ENCODE measurements at regions of chr11 and their contacts with region 1.

Region 1: DNA sequence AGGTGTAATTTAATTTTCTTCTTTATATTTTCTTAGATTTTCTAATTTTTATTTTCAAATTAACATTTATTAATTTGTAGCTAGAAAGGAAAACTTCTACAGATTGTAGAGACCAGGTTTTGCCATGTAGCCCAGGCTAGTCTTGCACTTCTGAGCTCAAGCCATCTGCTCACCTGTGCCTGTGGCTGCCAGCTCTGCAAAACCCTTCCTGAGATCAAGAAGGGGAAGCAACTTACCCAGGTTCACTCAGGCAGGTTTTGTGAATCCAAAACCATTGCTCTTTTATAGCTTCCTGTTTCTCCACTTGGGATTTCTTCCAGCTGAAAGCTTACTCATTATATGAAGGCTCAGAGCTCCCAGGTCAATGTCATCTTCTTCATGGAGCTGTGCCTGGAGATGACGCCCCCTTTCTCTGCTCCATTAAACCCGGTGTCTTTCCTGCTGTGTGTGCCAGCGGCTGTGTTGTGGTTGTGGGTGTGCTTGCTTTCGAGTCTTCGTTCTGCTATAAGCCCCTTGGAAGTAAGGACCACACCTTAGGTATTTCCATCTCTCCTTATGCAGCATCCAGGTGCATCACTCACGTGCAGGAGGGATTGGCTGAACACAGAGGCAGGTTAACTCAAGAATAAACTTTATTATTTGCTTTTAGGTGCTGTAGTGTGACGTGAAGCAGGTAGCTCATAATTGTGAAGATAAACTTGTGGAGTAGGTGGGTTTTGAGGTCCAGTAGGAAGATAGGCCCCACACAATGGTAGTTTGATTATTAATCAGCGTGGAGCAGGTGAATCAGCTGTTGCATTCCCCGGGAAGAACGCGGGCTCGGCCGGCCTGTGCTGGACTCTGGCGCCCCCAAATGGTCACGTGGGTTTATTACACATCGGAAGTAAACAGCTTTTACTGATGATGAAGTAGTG is 42.2 kb upstream of the INCENP start:
- DNase-seq: peak; percentile 84
- H3K4me3 Mint-ChIP-seq: no peak overlapping the region
- H3K27ac Mint-ChIP-seq: no peak overlapping the region
- H3K4me1 Mint-ChIP-seq: peaks cover 8% of the 10 kb centered on the region
- H3K27me3 Mint-ChIP-seq: peaks cover 5% of the 10 kb centered on the region

Region 2: DNA sequence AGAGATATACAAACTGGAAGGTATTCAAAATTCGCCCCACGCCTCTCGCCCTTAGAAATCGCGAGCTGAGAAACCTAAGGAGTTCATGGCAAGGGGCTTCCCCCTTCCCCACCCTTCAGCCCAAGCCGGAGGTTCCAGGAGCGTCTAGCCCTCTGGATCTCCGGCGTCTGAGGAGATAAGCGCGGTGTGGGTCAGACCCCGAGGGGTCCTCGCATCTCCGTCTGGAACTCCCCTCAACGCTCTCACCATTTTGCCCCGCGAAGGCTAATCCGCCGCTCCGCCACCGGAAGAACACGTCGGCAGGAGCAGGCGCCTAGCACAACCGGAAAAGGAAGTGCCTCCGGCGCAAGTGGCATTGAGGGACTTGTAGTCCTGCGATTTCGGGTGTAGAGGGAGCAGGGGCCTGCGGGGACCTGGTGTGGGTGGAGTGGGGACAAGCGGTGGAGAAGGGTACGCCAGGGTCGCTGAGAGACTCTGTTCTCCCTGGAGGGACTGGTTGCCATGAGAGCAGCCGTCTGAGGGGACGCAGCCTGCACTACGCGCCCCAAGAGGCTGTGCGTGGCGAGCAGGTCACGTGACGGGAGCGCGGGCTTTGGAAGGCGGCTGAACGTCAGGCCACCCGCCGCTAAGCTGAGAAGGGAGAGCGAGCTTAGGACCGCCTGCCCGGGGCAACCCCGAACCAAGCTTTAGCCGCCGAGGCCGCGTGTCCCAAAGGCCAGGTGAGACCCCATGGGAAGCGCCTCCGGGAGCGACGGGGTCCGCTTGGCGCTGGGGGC is 289.1 kb before region 1 on chr11 and contains the starts of genes FEN1 and TMEM258:
- CTCF ChIA-PET with region 1: interaction called, 20 read pairs
- DNase-seq: peak; percentile 93
- H3K4me3 Mint-ChIP-seq: peak within 1 kb of the TSS; percentile 77
- H3K27ac Mint-ChIP-seq: peak within 1 kb of the TSS; percentile 97
- H3K4me1 Mint-ChIP-seq: peaks cover 65% of the 10 kb centered on the region
- H3K27me3 Mint-ChIP-seq: no peaks in the 10 kb centered on the region

Region 3: DNA sequence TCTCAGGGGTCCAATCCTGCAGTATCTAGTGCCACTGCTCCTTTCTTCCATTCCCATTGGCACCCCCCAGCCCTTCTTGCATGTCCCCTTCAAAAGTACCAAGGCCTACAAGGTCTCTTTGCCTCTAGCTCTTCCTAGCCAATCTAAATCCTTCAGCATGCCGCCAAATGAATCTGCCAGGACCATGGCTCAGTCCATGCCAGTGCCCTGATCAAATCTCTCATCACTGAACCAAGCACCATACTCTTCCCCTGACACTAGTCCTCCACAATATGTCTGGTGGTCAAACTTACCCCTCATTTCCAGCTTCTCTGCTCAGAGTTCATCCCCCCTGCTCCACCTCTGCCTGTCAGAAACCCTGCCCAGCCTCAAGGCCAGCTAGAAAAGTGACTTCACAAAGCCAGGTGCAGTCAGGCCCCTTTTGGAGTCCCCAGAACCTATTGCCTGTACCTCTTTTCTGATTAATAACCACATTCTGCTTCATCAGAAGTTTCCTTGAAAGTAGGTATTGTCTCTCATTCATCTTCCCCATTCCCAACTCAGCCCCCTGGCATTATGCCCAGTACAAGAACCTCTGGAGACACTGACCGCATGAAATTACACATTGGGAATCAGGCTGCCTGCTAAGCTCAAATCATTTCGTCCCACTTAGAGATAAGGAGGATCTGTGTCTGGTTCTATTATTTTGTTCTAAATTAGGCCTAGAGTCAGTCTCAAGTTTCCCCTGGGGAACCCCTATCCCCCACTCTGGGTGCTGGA is 277.6 kb before region 1 on chr11:
- CTCF ChIA-PET with region 1: no interaction called
- DNase-seq: no peak
- H3K4me3 Mint-ChIP-seq: no peak overlapping the region
- H3K27ac Mint-ChIP-seq: no peak overlapping the region
- H3K4me1 Mint-ChIP-seq: peaks cover 12% of the 10 kb centered on the region
- H3K27me3 Mint-ChIP-seq: no peaks in the 10 kb centered on the region

Region 4: GRCh38 chr11:61891331-61892084 is 190.1 kb before region 1 on chr11 and contains the start of gene FADS3:
- CTCF ChIA-PET with region 1: interaction called, 261 read pairs
- DNase-seq: peak; percentile 81
- H3K4me3 Mint-ChIP-seq: peak within 1 kb of the TSS; percentile 81
- H3K27ac Mint-ChIP-seq: no peak within 1 kb of the TSS
- H3K4me1 Mint-ChIP-seq: peaks cover 3% of the 10 kb centered on the region
- H3K27me3 Mint-ChIP-seq: peaks cover 54% of the 10 kb centered on the region

Region 5: GRCh38 chr11:61912530-61912898 is 169.1 kb before region 1 on chr11:
- CTCF ChIA-PET with region 1: interaction called, 10 read pairs
- DNase-seq: no peak
- H3K4me3 Mint-ChIP-seq: no peak overlapping the region
- H3K27ac Mint-ChIP-seq: no peak overlapping the region
- H3K4me1 Mint-ChIP-seq: no peaks in the 10 kb centered on the region
- H3K27me3 Mint-ChIP-seq: peaks cover 37% of the 10 kb centered on the region

Region 6: DNA sequence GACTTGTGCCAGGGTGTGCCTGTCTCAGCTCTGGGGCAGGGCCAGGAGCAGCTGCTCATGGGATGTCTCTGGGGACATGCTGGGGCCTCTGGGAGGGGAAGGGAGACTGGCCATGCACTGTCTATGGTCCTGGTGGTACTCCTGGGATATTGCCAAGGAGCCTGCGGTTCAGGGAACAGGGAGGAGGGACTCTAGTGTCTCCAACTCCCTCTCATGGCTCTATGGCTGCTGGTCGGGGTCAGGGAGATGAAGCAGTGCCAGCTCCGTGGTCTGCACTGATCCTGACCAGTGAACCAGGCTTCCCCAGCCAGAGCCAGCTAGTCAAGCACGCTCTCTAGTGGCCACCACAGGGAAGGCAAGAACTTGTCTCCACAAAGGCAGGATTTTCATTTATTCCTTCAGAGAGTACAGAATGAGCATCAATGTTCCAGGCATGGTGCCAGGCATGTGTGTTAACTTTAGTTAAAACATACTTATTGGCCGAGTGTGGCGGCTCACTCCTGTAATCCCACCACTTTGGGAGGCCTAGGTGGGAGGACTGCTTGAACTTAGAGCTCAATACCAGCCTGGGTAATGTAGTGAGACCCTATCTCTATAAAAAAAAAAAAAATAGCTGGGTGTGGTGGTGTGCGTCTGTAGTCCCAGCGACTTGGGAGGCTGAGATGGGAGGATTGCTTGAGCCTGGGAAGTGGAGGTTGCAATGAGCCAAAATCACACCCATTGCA is 134.0 kb before region 1 on chr11:
- CTCF ChIA-PET with region 1: interaction called, 67 read pairs
- DNase-seq: peak; percentile 82
- H3K4me3 Mint-ChIP-seq: no peak overlapping the region
- H3K27ac Mint-ChIP-seq: no peak overlapping the region
- H3K4me1 Mint-ChIP-seq: no peaks in the 10 kb centered on the region
- H3K27me3 Mint-ChIP-seq: peaks cover 26% of the 10 kb centered on the region

Region 7: GRCh38 chr11:62025487-62026105 is 56.0 kb before region 1 on chr11:
- CTCF ChIA-PET with region 1: interaction called, 11 read pairs
- DNase-seq: peak; percentile 87
- H3K4me3 Mint-ChIP-seq: peak overlapping the region; percentile 49
- H3K27ac Mint-ChIP-seq: peak overlapping the region; percentile 100
- H3K4me1 Mint-ChIP-seq: peaks cover 26% of the 10 kb centered on the region
- H3K27me3 Mint-ChIP-seq: peaks cover 5% of the 10 kb centered on the region

Region 8: DNA sequence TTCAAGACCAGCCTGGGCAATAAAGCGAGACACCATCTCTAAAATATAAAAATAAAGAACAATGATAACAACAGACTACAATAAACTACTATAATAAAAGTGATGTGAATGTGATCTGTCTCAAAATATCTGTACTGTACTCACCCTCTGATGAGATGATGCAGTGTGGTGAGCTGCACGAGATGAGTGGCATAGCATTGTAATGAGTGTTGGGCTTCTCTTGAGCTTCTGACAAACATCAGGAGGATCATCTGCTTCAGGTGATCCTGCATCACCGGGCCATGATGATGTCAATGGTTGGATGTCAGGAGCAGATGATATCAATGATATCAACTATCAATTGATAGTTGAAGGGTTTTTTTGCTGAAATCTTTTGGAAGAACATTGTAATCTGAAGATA is 10.2 kb before region 1 on chr11:
- CTCF ChIA-PET with region 1: interaction called, 13 read pairs
- DNase-seq: no peak
- H3K4me3 Mint-ChIP-seq: no peak overlapping the region
- H3K27ac Mint-ChIP-seq: no peak overlapping the region
- H3K4me1 Mint-ChIP-seq: no peaks in the 10 kb centered on the region
- H3K27me3 Mint-ChIP-seq: peaks cover 8% of the 10 kb centered on the region

Measured in activated naive CD4-positive, alpha-beta T cell treated with anti-CD3 and anti-CD28 coated beads, Interleukin-2, amount 10 ng/mL, durations not matched to agents 7 days and 5 days (primary cell).